Activated CD8-positive, alpha-beta T cell treated with anti-CD3 and anti-CD28 coated beads for 36 hours (primary cell): ENCODE measurements at regions of chr1 and their contacts with region 1.

Region 1: DNA sequence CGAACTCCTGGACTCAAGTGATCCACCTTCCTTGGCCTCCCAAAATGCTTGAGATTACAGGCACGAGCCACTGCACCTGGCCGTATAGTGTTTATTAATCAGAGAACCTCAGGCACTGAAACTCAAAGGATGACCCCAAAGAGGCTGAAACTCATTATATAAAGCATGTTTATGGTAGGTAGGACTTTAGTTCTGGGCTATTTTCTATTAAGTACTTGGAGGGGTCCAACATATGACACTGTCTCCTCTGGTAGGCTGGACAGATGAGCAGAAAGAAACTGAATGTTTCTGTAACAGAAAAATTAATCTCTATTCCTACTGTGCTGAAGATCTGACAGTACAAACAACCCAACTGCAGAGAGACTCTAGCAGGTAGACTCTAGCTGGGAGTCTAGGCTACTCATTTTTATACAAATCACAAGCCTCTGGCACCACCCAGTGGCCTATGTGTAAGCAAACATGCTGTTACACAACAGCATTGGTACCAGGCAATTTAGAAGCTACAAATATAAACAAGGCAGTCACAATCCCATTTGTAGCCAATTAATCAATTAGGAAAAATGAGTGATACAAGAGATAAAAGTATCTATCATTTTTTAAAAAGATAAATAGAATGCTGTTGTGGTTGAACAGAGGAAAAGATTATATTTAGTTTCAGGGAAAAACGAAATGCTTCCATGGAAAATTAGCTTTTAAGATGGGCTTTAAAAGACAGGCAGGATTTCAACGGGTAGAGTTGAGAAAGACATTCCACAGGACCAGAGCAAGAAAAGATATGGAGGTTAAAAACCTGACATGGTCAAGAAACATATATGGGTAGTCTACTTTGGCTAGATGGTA is 10.4 kb downstream of the DCAF8 start:
- DNase-seq: peak; percentile 69
- ATAC-seq: peak; percentile 97
- H3K4me3 Mint-ChIP-seq: no peak overlapping the region
- H3K27ac Mint-ChIP-seq: peak overlapping the region; percentile 14
- H3K4me1 Mint-ChIP-seq: peaks cover 16% of the 10 kb centered on the region
- H3K27me3 Mint-ChIP-seq: no peaks in the 10 kb centered on the region
- CTCF ChIP-seq: peak; percentile 69

Region 2: DNA sequence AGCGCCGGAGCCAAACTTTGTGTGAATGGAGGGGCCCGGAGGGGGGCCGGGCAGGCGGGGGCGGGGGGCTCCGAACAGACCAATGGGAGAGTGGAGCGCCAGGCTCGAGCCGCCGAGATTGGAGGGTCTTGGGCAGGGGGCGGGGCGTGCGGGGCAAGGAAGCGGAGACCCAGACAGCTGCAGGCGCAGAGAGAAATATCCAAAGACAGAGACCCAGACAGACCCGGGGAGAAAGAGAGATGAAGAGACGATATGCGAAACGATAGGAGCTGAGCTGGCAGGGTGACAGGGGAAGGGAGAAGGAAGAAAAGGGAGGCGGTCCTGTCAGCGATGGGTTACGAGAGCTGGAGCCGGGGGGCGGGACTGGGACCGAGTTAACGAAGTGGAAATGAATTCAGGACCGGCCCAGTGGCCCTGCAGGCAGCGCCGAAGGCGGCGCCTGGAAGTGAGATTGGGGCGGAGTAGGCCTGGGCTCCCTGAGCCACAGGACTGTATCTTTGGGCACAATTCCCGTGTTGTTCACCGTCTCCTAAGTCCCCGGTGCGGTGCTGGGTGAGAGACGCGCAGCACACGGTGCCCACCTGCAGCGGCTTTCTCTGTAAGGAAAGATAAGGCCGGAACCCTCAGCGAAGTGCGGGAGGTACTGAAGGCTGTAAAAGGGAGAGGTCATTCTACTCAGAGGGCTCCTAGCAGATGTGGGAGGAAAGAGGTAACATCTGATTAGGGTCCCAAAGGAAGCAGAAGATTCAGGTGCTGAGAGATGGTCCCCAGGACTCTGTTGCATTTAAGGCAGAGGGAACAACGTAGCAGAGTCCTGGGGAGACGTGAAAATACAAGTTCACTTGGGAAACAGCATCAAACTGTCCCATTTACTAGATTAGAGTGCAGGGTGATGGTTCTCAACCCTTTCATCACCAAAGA is 181.4 kb before region 1 on chr1:
- CTCF ChIA-PET with region 1: no interaction called
- POLR2A ChIA-PET with region 1: no interaction called
- intact Hi-C with region 1: no loop called
- DNase-seq: peak; percentile 78
- ATAC-seq: peak; percentile 90
- H3K4me3 Mint-ChIP-seq: peak overlapping the region; percentile 80
- H3K27ac Mint-ChIP-seq: no peak overlapping the region
- H3K4me1 Mint-ChIP-seq: peaks cover 17% of the 10 kb centered on the region
- H3K27me3 Mint-ChIP-seq: peaks cover 26% of the 10 kb centered on the region
- CTCF ChIP-seq: no peak

Region 3: GRCh38 chr1:160108888-160109662 is 142.8 kb before region 1 on chr1:
- CTCF ChIA-PET with region 1: interaction called, 13 read pairs
- POLR2A ChIA-PET with region 1: interaction called, 4 read pairs
- intact Hi-C with region 1: loop called (anchors 10 kb)
- DNase-seq: peak; percentile 69
- ATAC-seq: peak; percentile 74
- H3K4me3 Mint-ChIP-seq: no peak overlapping the region
- H3K27ac Mint-ChIP-seq: peak overlapping the region; percentile 84
- H3K4me1 Mint-ChIP-seq: peaks cover 6% of the 10 kb centered on the region
- H3K27me3 Mint-ChIP-seq: peaks cover 4% of the 10 kb centered on the region
- CTCF ChIP-seq: peak; percentile 54

Region 4: DNA sequence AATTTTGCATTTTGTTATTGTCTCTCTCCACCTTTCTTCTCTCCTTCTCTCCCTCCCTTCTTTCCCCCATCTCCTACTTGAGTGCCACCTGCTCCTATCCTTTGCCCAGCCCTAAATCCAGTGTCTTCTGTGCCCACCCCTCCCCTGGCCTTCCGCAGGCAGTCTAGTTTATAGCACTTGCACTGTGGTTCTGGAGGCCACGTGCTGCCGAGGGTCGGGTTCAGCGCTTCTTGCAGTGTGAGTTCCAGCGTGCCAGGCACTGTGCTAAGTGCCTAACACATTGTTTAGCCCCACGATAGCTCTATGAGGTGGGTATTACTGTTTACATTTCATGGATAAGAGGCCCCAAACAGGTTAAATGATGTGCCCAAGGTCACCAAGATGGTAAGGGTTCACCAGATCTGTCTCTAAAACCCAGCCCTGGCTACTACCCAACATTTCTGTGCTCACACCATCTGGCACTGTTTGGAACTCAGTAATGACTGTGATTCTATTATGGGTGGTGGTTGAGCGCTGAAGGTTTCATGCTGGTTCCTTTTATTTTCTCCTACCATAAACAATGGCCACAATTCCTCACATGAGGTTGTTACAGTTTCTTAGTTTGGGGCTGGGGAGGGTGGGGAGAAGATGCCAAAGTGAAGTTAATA is 114.6 kb before region 1 on chr1:
- CTCF ChIA-PET with region 1: no interaction called
- POLR2A ChIA-PET with region 1: no interaction called
- intact Hi-C with region 1: no loop called
- DNase-seq: no peak
- ATAC-seq: no peak
- H3K4me3 Mint-ChIP-seq: no peak overlapping the region
- H3K27ac Mint-ChIP-seq: no peak overlapping the region
- H3K4me1 Mint-ChIP-seq: no peaks in the 10 kb centered on the region
- H3K27me3 Mint-ChIP-seq: peaks cover 1% of the 10 kb centered on the region
- CTCF ChIP-seq: no peak

Region 5: DNA sequence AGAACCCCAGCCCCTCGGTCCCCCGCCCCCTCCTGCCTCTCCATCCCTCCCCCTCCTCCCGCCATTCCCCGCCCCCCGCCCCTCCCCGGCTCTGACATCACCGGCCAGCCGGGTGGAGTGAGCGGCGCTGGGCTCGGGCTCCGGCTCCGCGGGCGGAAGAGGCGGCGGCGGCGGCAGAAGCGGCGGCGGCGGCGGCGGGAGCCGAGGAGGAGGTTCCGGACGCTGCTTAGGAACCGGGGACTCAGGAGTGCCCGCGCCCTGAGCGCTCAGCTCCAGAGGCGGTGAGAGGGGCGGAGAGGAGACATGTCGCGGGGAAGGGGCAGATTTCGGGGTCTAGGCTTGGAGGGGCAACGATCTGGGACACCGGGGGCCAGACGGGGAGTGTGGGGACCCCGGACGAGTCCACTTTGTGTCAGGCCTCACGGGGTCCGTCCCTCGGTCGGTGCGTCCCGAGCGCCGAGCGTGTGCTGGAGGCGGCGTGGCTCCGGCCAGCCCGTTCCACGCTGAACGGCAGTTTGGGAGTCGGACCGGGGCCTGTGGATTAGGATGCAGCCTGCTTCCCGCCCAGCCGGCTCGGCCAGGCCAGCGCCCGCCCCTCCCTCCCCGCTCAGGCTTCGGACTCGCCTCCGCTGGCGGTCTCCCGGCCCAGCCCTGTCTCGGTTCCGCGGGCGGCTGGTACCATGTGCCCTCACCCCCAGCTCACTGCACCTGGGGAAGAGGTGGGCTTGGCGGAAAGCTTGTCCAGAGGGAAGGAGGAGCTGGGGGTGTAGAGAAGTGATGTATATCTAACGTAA is 46.5 kb before region 1 on chr1 and contains the start of gene PEA15:
- CTCF ChIA-PET with region 1: interaction called, 14 read pairs
- POLR2A ChIA-PET with region 1: no interaction called
- intact Hi-C with region 1: no loop called
- DNase-seq: peak; percentile 70
- ATAC-seq: peak; percentile 76
- H3K4me3 Mint-ChIP-seq: peak within 1 kb of the TSS; percentile 82
- H3K27ac Mint-ChIP-seq: peak within 1 kb of the TSS; percentile 87
- H3K4me1 Mint-ChIP-seq: peaks cover 48% of the 10 kb centered on the region
- H3K27me3 Mint-ChIP-seq: no peaks in the 10 kb centered on the region
- CTCF ChIP-seq: no peak
- total RNA-seq, gene PEA15: 31.8 to 34.1 TPM

Region 6: DNA sequence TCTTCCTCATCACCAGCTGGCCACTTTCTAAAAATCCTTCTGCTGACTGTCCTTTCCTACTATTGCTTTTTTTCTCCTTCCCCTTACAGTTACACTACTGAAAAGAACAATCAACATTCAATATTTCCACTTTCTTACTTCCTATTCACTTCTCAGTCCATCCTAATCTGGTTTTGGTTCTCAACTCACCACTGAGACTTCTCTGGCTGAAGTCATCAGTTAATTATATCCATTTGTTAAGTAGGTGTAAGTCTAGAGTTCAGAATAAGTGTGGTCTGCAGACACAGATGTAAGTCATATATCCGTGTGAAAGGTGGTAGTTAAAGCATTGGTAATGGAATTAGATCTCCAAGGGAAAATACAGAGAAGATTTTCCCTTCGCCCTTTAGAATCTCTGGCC is 25.3 kb before region 1 on chr1:
- CTCF ChIA-PET with region 1: interaction called, 18 read pairs
- POLR2A ChIA-PET with region 1: no interaction called
- intact Hi-C with region 1: no loop called
- DNase-seq: no peak
- ATAC-seq: no peak
- H3K4me3 Mint-ChIP-seq: no peak overlapping the region
- H3K27ac Mint-ChIP-seq: no peak overlapping the region
- H3K4me1 Mint-ChIP-seq: no peaks in the 10 kb centered on the region
- H3K27me3 Mint-ChIP-seq: no peaks in the 10 kb centered on the region
- CTCF ChIP-seq: no peak

Region 7: DNA sequence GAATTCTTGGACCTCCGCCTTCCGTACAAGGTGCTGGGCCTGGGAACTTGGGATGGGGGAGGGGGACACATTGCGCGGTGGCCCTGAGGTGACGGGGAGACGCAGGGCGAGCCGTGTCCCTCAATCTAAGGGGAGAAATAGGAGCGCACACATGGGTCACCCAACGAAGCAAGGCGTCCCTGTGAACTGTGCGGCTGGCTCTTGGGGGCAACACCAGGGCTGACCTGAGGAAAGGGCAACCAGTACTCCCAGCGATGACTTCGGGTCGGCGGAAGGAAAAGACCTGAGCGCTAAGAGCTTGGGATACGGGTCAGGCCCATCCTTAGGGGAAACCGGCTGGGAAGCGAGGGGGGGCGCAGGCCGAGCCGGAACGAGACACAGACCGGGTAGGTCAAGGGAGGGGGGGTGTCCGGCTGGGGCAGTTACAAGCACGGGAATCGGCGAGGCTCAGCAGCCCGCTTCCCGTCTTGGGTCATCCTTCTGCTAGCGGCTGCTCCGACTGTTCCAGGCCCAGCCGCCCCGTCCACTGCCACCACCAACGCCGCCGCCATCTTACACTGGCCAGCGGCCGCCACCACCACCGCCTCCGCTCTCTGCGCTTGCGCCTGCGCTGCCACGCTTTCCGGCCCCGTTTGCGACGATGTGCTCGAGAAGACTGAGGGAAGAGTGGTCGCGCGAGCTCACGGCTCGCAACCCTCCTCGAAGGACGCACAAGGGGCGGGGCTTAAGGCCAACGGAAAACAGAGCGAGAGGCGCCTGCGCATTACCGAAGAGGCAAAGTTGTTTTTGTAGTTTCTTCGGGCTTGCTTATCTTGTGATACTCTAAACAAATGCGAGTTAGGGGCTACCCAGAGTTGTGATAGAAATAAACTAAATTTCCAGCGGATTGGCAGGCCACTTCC is 10.2 kb after region 1 on chr1 and contains the start of gene DCAF8:
- CTCF ChIA-PET with region 1: interaction called, 51 read pairs
- POLR2A ChIA-PET with region 1: interaction called, 7 read pairs
- intact Hi-C with region 1: no loop called
- DNase-seq: peak; percentile 99
- ATAC-seq: peak; percentile 92
- H3K4me3 Mint-ChIP-seq: peak within 1 kb of the TSS; percentile 83
- H3K27ac Mint-ChIP-seq: peak within 1 kb of the TSS; percentile 97
- H3K4me1 Mint-ChIP-seq: peaks cover 41% of the 10 kb centered on the region
- H3K27me3 Mint-ChIP-seq: no peaks in the 10 kb centered on the region
- CTCF ChIP-seq: no peak
- total RNA-seq, gene DCAF8: 116 TPM

Region 8: DNA sequence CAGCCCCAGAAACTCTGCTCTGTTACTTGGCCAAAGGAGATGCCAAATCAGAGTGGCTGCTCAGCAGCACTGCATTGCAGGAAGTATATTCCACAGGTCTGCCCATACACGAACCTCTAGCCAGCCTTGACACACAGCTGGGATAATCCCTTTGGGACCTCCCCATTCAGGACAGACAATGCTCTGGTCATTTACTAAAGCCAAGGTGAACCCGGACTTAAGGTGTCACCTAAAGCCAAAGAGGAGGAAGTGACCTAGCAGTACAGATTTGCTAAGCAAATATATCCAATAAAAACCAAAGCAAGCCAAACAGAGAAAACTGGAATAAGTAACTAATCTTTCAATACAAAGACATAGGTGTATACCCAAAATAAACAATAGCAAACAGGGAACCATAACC is 63.5 kb after region 1 on chr1:
- CTCF ChIA-PET with region 1: no interaction called
- POLR2A ChIA-PET with region 1: no interaction called
- intact Hi-C with region 1: no loop called
- DNase-seq: no peak
- ATAC-seq: no peak
- H3K4me3 Mint-ChIP-seq: no peak overlapping the region
- H3K27ac Mint-ChIP-seq: peak overlapping the region; percentile 63
- H3K4me1 Mint-ChIP-seq: peaks cover 17% of the 10 kb centered on the region
- H3K27me3 Mint-ChIP-seq: no peaks in the 10 kb centered on the region
- CTCF ChIP-seq: no peak